ENCODE measurements at regions of chr3 and their contacts with region 1.

Region 1: DNA sequence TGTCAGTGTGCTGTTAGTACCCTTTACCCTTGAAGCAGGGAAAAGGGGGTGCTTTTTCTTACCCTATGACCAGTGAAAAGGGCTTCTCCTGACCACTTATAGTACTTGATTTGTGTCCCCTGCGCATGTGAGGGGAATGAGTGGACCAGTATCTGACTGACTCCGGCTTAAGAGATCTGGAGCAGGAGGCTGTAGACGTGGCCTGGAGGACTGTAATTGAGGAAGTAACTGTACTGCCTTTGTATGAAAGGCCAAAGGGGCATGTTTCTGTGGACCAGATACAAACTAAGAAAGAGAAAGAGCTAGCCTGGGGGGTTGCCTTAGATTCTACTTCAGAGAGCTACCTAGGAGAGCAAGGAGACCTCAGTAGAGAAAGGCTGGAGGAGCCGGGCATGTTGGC is 89.9 kb upstream of the TBL1XR1 start:
- DNase-seq: no peak
- H3K4me3 ChIP-seq: no peak overlapping the region
- H3K27ac ChIP-seq: no peak overlapping the region
- H3K4me1 ChIP-seq: peaks cover 16% of the 10 kb centered on the region
- CTCF ChIP-seq: no peak

Region 2: DNA sequence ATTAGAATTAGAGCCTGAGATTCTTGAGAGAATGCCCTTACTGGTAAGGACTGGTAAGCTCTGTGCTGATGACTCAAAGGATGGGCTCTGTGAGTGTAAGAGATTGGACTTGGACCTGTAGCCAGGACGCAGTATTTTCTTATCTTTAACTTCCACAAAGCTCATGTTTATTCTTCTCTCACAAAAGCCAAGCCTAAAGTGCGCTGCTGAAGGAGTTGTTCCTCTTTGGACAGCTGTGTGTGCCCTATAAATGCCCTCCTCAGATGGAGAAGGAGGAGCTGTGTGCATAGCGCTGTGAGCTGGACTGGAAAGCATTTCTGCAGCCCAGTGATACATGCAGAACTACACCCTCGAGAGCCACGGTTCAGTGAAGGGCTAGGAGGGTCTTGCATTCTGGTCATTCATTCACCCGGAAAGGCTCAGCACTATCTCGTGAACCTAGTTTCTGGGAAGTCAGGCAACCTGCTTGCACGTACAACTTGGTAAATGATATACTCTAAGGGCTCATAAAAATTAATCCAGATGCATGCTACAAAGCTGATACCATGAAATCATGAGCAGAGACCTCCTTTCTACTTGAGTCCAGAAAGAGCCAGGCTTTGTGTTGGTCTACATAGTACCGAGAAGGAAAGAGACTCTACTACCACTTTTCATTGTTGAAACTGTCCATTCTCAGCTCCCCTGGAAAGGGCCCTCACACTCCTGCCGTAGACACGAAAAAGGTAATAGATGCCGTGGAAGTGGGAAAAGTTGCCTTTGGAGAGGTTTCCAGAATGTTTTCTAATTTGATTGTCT is 13.0 kb after region 1 on chr3:
- CTCF ChIA-PET with region 1: no interaction called
- POLR2A ChIA-PET with region 1: interaction called, 13 read pairs
- intact Hi-C with region 1: no loop called
- DNase-seq: peak; percentile 27
- H3K4me3 ChIP-seq: no peak overlapping the region
- H3K27ac ChIP-seq: no peak overlapping the region
- H3K4me1 ChIP-seq: peaks cover 8% of the 10 kb centered on the region
- CTCF ChIP-seq: no peak